SK-N-SH (cell line): ENCODE measurements at regions of chr7 and their contacts with region 1.

Region 1: GRCh38 chr7:33932832-33933468 is 27.6 kb downstream of the BMPER start:
- DNase-seq: peak; percentile 80
- H3K4me3 ChIP-seq: peak overlapping the region; percentile 30 to 49
- H3K27ac ChIP-seq: peak overlapping the region in 1 of 2 experiments; percentile 91; a peak in 2 of 4 replicates
- H3K4me1 ChIP-seq: peaks cover 19 to 24% of the 10 kb centered on the region in 2 experiments
- H3K27me3 ChIP-seq: no peaks in the 10 kb centered on the region
- CTCF ChIP-seq: peak; percentile 100
- EP300 ChIP-seq: no peak; a peak in 1 of 4 replicates
- RAD21 ChIP-seq: peak; percentile 91

Region 2: GRCh38 chr7:33177876-33178275 is 755.1 kb before region 1 on chr7:
- CTCF ChIA-PET with region 1: interaction called, 10 read pairs
- POLR2A ChIA-PET with region 1: no interaction called
- DNase-seq: no peak
- H3K4me3 ChIP-seq: no peak overlapping the region
- H3K27ac ChIP-seq: no peak overlapping the region
- H3K4me1 ChIP-seq: peaks cover 0 to 3% of the 10 kb centered on the region in 2 experiments; a peak in 2 of 4 replicates
- H3K27me3 ChIP-seq: no peaks in the 10 kb centered on the region
- CTCF ChIP-seq: no peak
- EP300 ChIP-seq: no peak
- RAD21 ChIP-seq: no peak

Region 3: DNA sequence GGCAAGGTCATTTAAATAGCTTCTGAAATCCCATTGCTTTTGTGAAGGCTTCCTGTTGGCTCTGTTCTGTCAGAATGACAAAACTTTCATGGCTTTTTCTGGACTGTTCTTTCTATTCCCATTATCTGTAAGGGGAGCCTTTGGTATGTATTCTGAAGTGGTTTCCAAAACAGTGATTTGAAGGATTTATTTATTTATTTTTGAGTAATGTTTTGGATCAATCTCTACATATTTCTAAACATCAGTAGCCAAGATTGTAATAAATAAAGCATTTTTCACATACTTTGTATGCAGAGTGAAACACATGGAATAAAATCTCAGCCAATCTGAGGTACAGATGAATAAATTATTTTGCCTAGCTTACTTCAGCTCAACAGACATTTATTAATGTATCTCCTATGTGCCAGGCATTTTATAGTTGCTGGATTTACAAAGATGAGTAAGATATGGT is 682.5 kb before region 1 on chr7:
- CTCF ChIA-PET with region 1: interaction called, 13 read pairs
- POLR2A ChIA-PET with region 1: no interaction called
- DNase-seq: no peak
- H3K4me3 ChIP-seq: no peak overlapping the region
- H3K27ac ChIP-seq: peak overlapping the region; percentile 24 to 71; a peak in 3 of 4 replicates
- H3K4me1 ChIP-seq: peaks cover 0 to 10% of the 10 kb centered on the region in 2 experiments; a peak in 2 of 4 replicates
- H3K27me3 ChIP-seq: no peaks in the 10 kb centered on the region
- CTCF ChIP-seq: no peak
- EP300 ChIP-seq: peak; percentile 18 to 67; a peak in 3 of 4 replicates
- RAD21 ChIP-seq: no peak

Region 4: GRCh38 chr7:33716581-33717477 is 216.1 kb before region 1 on chr7:
- CTCF ChIA-PET with region 1: interaction called, 26 read pairs
- POLR2A ChIA-PET with region 1: no interaction called
- DNase-seq: no peak
- H3K4me3 ChIP-seq: no peak overlapping the region
- H3K27ac ChIP-seq: no peak overlapping the region
- H3K4me1 ChIP-seq: peaks cover 0 to 2% of the 10 kb centered on the region in 2 experiments; a peak in 2 of 4 replicates
- H3K27me3 ChIP-seq: no peaks in the 10 kb centered on the region
- CTCF ChIP-seq: peak; percentile 98
- EP300 ChIP-seq: no peak
- RAD21 ChIP-seq: peak; percentile 77

Region 5: DNA sequence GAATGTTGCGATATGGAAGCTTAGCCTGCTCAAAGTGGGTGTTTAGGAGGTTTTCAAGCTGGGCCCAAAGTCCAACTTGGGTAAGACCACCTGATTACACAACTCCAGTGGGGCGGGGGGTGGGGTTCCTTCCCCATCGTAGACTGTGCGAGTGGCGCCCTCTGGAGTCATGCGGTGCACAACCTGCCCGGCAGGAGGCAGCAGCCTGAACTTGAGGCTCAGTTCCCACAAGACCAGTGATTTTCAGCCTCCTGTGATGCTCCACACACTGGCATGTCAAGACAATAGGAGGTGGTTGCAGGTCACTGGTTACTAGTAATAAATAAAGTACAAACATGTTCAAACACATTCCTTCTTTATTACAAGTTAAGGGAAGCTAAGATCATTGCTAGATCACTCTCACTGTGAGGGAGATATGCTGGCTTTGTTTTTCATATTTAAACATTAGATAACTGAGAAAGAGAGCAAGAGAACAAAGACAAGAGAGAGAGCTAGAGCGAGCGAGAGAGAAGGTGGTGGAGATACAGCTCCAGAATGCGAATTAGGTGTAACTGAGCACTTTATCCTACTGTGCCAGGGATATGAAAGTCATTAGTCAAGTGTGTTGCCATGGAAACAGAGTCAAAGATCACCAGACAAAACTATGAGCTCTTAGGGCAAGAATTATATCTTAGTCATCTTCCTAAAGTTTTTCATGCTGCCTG is 125.0 kb before region 1 on chr7:
- CTCF ChIA-PET with region 1: interaction called, 19 read pairs
- POLR2A ChIA-PET with region 1: no interaction called
- DNase-seq: peak; percentile 48
- H3K4me3 ChIP-seq: no peak overlapping the region
- H3K27ac ChIP-seq: peak overlapping the region; percentile 39 to 84; a peak in 3 of 4 replicates
- H3K4me1 ChIP-seq: peaks cover 12 to 35% of the 10 kb centered on the region in 2 experiments
- H3K27me3 ChIP-seq: no peaks in the 10 kb centered on the region
- CTCF ChIP-seq: peak; percentile 77
- EP300 ChIP-seq: peak in 1 of 2 experiments; percentile 80; a peak in 2 of 4 replicates
- RAD21 ChIP-seq: peak; percentile 67

Region 6: DNA sequence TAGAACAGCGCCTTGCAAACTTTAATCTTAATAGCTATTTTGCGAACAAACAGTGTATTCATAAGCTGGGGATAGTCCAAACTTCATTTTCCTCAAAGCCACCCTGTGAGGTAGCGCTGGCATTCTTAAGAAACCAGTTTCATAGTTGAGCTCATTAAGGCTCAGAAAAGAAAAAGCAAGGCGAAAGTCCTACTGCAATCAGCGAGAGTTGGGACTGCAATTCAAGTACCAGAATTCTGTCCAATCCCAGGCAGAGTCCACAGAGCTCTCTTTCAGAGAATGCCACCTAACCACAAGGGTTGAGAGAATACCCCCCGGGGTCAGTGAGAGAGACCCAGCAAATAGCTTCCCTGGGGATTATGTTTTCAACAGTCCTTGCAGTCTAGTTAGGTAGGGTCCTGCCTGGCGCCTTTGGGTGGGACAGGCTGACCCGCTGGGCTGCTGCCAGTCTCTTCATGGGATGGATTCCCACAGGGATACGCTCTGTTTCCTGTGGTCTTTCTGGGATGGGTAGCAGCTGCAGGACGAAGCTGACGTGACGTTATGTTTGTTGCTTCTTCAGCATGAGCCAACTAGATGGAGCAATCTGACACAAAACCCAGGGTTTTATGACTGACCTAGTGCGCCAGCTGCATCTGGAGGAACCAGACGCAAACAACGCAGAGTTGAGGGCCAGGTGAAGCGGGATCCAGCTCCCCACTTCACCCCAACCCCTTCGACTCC is 11.6 kb before region 1 on chr7:
- CTCF ChIA-PET with region 1: interaction called, 57 read pairs
- POLR2A ChIA-PET with region 1: no interaction called
- DNase-seq: no peak
- H3K4me3 ChIP-seq: no peak overlapping the region
- H3K27ac ChIP-seq: no peak overlapping the region
- H3K4me1 ChIP-seq: no peaks in the 10 kb centered on the region; a peak in 1 of 4 replicates
- H3K27me3 ChIP-seq: no peaks in the 10 kb centered on the region
- CTCF ChIP-seq: no peak
- EP300 ChIP-seq: no peak
- RAD21 ChIP-seq: no peak

Region 7: DNA sequence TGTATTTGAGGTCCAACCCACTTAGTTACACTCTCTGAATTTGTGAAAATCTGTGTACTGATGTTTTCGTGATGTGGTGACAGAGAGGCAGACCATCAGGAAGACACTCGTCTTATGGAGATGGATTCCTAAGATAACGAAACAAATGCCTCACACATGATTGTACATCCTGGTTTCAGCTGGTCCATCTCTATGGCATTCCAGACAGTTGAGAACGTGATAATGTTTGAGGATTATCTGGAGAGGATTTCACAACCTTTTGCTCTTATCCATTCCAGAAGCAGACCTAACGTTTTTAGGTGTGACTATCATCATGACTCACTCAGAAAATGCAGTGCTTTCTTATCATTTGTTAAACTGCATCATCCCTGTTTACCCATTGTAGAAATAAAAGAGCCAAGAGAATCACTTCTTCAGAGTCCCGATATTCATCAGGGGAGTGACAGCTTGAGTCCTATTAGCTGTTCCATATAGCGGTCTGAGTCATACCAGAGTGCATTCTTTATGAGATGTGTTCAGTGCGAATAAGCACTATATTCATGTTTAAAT is 46.9 kb after region 1 on chr7:
- CTCF ChIA-PET with region 1: interaction called, 10 read pairs
- POLR2A ChIA-PET with region 1: no interaction called
- DNase-seq: no peak
- H3K4me3 ChIP-seq: peak overlapping the region; percentile 7 to 23; a peak in 3 of 4 replicates
- H3K27ac ChIP-seq: peak overlapping the region; percentile 75 to 94; a peak in 3 of 4 replicates
- H3K4me1 ChIP-seq: peaks cover 5 to 40% of the 10 kb centered on the region in 2 experiments
- H3K27me3 ChIP-seq: no peaks in the 10 kb centered on the region
- CTCF ChIP-seq: no peak
- EP300 ChIP-seq: peak; percentile 44 to 99
- RAD21 ChIP-seq: no peak

Region 8: DNA sequence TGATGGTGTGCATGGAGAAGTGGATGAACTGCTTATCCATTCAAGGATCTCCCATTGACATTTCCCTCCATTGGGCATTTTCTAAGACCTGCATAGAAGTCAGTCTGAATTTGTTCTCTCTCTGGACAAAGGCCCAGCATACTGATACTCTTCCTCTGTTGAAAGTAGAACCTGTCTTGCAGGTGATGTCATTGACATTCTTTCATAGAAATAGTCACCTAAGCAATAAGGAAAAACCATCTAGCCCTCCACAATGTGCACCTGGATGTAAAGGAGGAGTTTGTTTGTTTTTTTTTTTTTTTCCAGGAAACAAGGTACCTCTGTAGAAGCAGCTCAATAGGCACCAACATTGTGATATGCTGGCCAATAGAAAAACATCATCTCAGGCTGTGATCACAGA is 953.9 kb after region 1 on chr7:
- CTCF ChIA-PET with region 1: no interaction called
- POLR2A ChIA-PET with region 1: no interaction called
- DNase-seq: no peak
- H3K4me3 ChIP-seq: no peak overlapping the region
- H3K27ac ChIP-seq: no peak overlapping the region
- H3K4me1 ChIP-seq: no peaks in the 10 kb centered on the region
- H3K27me3 ChIP-seq: no peaks in the 10 kb centered on the region
- CTCF ChIP-seq: no peak
- EP300 ChIP-seq: no peak
- RAD21 ChIP-seq: no peak